A673 (cell line): ENCODE measurements at regions of chr2 and their contacts with region 1.

Region 1: DNA sequence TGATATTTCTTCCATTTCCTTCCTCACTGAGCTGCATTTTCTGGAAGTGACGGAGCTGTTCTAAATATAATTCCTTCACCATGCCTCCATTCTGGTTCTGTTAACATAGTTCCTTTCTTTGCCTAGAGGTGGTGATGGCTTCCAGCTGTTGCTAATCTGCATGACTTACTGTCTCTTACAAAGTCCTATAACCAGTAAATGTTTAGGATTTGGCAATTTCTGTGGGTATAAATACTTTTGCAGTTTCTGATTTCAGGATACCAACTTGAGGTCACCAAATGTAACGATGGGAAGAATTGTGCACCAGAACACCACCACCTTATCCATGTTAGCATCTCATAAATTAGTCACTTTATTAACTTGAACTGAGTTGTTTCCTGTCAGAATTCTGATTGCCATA is 101.7 kb upstream of the FN1 start:
- DNase-seq: peak; percentile 98
- H3K4me3 ChIP-seq: no peak overlapping the region
- H3K27ac ChIP-seq: peak overlapping the region; percentile 97
- H3K4me1 ChIP-seq: peaks cover 62% of the 10 kb centered on the region
- H3K27me3 ChIP-seq: no peaks in the 10 kb centered on the region
- CTCF ChIP-seq: no peak

Region 2: GRCh38 chr2:215435809-215436704 is 101.6 kb before region 1 on chr2 and contains the start of gene FN1:
- CTCF ChIA-PET with region 1: no interaction called
- POLR2A ChIA-PET with region 1: no interaction called
- intact Hi-C with region 1: loop called (anchors 1 kb)
- DNase-seq: peak; percentile 96
- H3K4me3 ChIP-seq: peak within 1 kb of the TSS; percentile 88
- H3K27ac ChIP-seq: peak within 1 kb of the TSS; percentile 96
- H3K4me1 ChIP-seq: peaks cover 28% of the 10 kb centered on the region
- H3K27me3 ChIP-seq: no peaks in the 10 kb centered on the region
- CTCF ChIP-seq: no peak
- total RNA-seq, gene FN1: 1,570 and 2,058 TPM in 2 replicates

Region 3: DNA sequence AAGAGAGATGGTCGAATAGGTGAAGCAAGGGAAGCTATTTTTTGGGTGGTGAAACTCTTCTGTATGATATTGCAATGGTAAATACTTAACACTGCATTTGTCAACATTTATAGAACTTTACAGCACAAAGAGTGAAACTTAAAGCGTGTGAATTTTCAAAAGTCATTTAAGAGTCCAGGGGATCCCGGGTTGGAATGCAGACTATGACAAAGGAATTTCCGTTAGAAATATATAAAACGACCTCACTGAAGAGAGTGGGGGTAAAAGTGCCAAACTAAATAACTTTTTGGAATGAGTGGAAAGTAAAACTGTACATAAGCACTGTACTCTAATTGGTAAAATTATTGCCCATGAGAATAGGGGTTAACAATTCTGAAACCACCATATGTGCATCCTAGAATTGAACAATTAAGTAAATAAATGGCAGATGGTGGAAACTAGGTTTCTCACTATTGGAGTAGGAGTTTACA is 89.2 kb after region 1 on chr2:
- CTCF ChIA-PET with region 1: no interaction called
- POLR2A ChIA-PET with region 1: no interaction called
- intact Hi-C with region 1: loop called (anchors 5 kb)
- DNase-seq: peak; percentile 70
- H3K4me3 ChIP-seq: no peak overlapping the region
- H3K27ac ChIP-seq: peak overlapping the region; percentile 72
- H3K4me1 ChIP-seq: peaks cover 33% of the 10 kb centered on the region
- H3K27me3 ChIP-seq: no peaks in the 10 kb centered on the region
- CTCF ChIP-seq: no peak

Region 4: GRCh38 chr2:215784371-215784783 is 246.8 kb after region 1 on chr2:
- CTCF ChIA-PET with region 1: no interaction called
- POLR2A ChIA-PET with region 1: no interaction called
- intact Hi-C with region 1: loop called (anchors 5 kb)
- DNase-seq: peak; percentile 95
- H3K4me3 ChIP-seq: no peak overlapping the region
- H3K27ac ChIP-seq: peak overlapping the region; percentile 88
- H3K4me1 ChIP-seq: peaks cover 74% of the 10 kb centered on the region
- H3K27me3 ChIP-seq: no peaks in the 10 kb centered on the region
- CTCF ChIP-seq: no peak

Region 5: DNA sequence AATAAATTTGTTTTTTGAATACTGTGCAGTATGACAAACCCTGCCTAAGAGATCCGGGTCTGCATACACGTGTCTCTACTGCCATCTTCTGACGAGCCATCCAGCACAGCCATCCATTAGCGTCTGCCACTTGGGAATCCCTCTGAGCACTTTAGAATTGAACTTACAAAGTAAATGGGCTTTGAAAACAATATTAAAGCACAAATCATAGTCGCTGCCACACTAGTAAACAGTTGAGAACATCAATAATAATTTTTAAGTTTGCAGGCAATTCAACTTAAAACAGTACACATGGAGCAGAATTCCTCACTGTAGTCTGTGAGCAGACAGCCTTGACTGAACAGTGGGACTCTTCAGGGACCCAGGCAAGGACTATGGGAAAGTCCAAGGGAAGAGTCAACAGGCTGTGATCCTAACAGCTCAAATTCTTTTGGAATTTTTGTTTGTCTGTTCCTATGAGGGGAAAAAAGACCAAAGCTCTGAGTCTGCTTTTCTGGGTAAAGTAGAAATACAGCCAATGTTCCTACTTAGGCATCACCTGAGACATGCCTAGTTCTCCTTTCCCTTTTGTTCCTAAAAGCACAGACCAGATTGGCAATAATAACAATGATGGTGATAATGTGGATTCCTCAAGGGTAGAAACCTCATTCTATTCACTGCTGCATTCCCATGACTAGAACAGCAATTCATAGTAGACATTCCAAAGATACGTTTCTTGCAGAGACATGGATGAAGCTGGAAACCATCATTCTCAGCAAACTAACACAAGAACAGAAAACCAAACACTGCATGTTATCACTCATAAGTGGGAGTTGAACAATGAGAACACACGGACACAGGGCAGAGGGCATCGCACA is 382.9 kb after region 1 on chr2:
- CTCF ChIA-PET with region 1: no interaction called
- POLR2A ChIA-PET with region 1: no interaction called
- intact Hi-C with region 1: loop called (anchors 1 kb)
- DNase-seq: peak; percentile 89
- H3K4me3 ChIP-seq: no peak overlapping the region
- H3K27ac ChIP-seq: peak overlapping the region; percentile 81
- H3K4me1 ChIP-seq: peaks cover 26% of the 10 kb centered on the region
- H3K27me3 ChIP-seq: no peaks in the 10 kb centered on the region
- CTCF ChIP-seq: peak; percentile 92